CD4-positive, alpha-beta memory T cell (primary cell): ENCODE measurements at regions of chr4 and their contacts with region 1.

Region 1: GRCh38 chr4:128809477-128810330 is at the start of gene JADE1:
- DNase-seq: peak; percentile 88 to 94 (median 90)
- H3K4me3 ChIP-seq: peak within 1 kb of the TSS; percentile 89 to 98
- H3K4me3 Mint-ChIP-seq: peak within 1 kb of the TSS; percentile 96 to 100 (median 99)
- H3K27ac ChIP-seq: peak within 1 kb of the TSS; percentile 61
- H3K27ac Mint-ChIP-seq: peak within 1 kb of the TSS; percentile 96 to 100 (median 98)
- H3K4me1 ChIP-seq: peaks cover 23% of the 10 kb centered on the region
- H3K4me1 Mint-ChIP-seq: peaks cover 9 to 38% (median 18%) of the 10 kb centered on the region in 4 donors
- H3K27me3 ChIP-seq: no peaks in the 10 kb centered on the region
- H3K27me3 Mint-ChIP-seq: no peaks in the 10 kb centered on the region
- total RNA-seq, gene JADE1: 65.6 to 67.3 TPM

Region 2: GRCh38 chr4:127880764-127881562 is 928.7 kb before region 1 on chr4 and contains the start of gene PLK4:
- CTCF ChIA-PET with region 1: no interaction called
- POLR2A ChIA-PET with region 1: interaction called, 3 read pairs
- intact Hi-C with region 1: loop called (anchors 2 kb)
- DNase-seq: peak; percentile 92 to 95 (median 93)
- H3K4me3 ChIP-seq: peak within 1 kb of the TSS; percentile 79 to 93
- H3K4me3 Mint-ChIP-seq: peak within 1 kb of the TSS; percentile 96 to 100 (median 97)
- H3K27ac ChIP-seq: peak within 1 kb of the TSS; percentile 68
- H3K27ac Mint-ChIP-seq: peak within 1 kb of the TSS; percentile 96 to 100 (median 98)
- H3K4me1 ChIP-seq: peaks cover 14% of the 10 kb centered on the region
- H3K4me1 Mint-ChIP-seq: peaks cover 8 to 28% (median 18%) of the 10 kb centered on the region in 4 donors
- H3K27me3 ChIP-seq: no peaks in the 10 kb centered on the region
- H3K27me3 Mint-ChIP-seq: no peaks in the 10 kb centered on the region
- total RNA-seq, gene PLK4: 1.1 to 2.6 TPM

Region 3: GRCh38 chr4:128060699-128061565 is 748.8 kb before region 1 on chr4 and contains the start of gene LARP1B:
- CTCF ChIA-PET with region 1: no interaction called
- POLR2A ChIA-PET with region 1: interaction called, 6 read pairs
- intact Hi-C with region 1: loop called (anchors 5 kb)
- DNase-seq: peak; percentile 90 to 93 (median 92)
- H3K4me3 ChIP-seq: peak within 1 kb of the TSS; percentile 74 to 76
- H3K4me3 Mint-ChIP-seq: peak within 1 kb of the TSS; percentile 86 to 91 (median 88)
- H3K27ac ChIP-seq: peak within 1 kb of the TSS; percentile 85
- H3K27ac Mint-ChIP-seq: peak within 1 kb of the TSS; percentile 90 to 96 (median 91)
- H3K4me1 ChIP-seq: peaks cover 17% of the 10 kb centered on the region
- H3K4me1 Mint-ChIP-seq: peaks cover 10 to 17% (median 13%) of the 10 kb centered on the region in 4 donors
- H3K27me3 ChIP-seq: no peaks in the 10 kb centered on the region
- H3K27me3 Mint-ChIP-seq: no peaks in the 10 kb centered on the region
- total RNA-seq, gene LARP1B: 15.8 to 19.1 TPM

Region 4: GRCh38 chr4:128287871-128288688 is 521.6 kb before region 1 on chr4:
- CTCF ChIA-PET with region 1: no interaction called
- POLR2A ChIA-PET with region 1: interaction called, 3 read pairs
- intact Hi-C with region 1: loop called (anchors 1 kb)
- DNase-seq: peak; percentile 97 to 100 (median 99)
- H3K4me3 ChIP-seq: peak overlapping the region; percentile 33 to 87
- H3K4me3 Mint-ChIP-seq: peak overlapping the region; percentile 81 to 91 (median 88)
- H3K27ac ChIP-seq: peak overlapping the region; percentile 88
- H3K27ac Mint-ChIP-seq: peak overlapping the region; percentile 80 to 97 (median 96)
- H3K4me1 ChIP-seq: peaks cover 43% of the 10 kb centered on the region
- H3K4me1 Mint-ChIP-seq: peaks cover 24 to 42% (median 31%) of the 10 kb centered on the region in 4 donors
- H3K27me3 ChIP-seq: no peaks in the 10 kb centered on the region
- H3K27me3 Mint-ChIP-seq: no peaks in the 10 kb centered on the region

Region 5: GRCh38 chr4:128574706-128575105 is 235.0 kb before region 1 on chr4:
- CTCF ChIA-PET with region 1: interaction called, 17 read pairs
- POLR2A ChIA-PET with region 1: interaction called, 3 read pairs
- intact Hi-C with region 1: no loop called
- DNase-seq: peak; percentile 38 to 52 (median 43)
- H3K4me3 ChIP-seq: no peak overlapping the region
- H3K4me3 Mint-ChIP-seq: no peak overlapping the region
- H3K27ac ChIP-seq: no peak overlapping the region
- H3K27ac Mint-ChIP-seq: no peak overlapping the region
- H3K4me1 ChIP-seq: no peaks in the 10 kb centered on the region
- H3K4me1 Mint-ChIP-seq: no peaks in the 10 kb centered on the region
- H3K27me3 ChIP-seq: no peaks in the 10 kb centered on the region
- H3K27me3 Mint-ChIP-seq: peaks cover 4% of the 10 kb centered on the region in 2 donors

Region 6: GRCh38 chr4:128820671-128821070 is 11.0 kb after region 1 on chr4:
- CTCF ChIA-PET with region 1: interaction called, 7 read pairs
- POLR2A ChIA-PET with region 1: interaction called, 12 read pairs
- intact Hi-C with region 1: no loop called
- DNase-seq: no peak
- H3K4me3 ChIP-seq: no peak overlapping the region
- H3K4me3 Mint-ChIP-seq: peak overlapping the region in 1 of 8 donors; percentile 22
- H3K27ac ChIP-seq: no peak overlapping the region
- H3K27ac Mint-ChIP-seq: peak overlapping the region in 3 of 7 donors; percentile 1 to 35 (median 7)
- H3K4me1 ChIP-seq: peaks cover 69% of the 10 kb centered on the region
- H3K4me1 Mint-ChIP-seq: peaks cover 55 to 87% (median 68%) of the 10 kb centered on the region in 4 donors
- H3K27me3 ChIP-seq: no peaks in the 10 kb centered on the region
- H3K27me3 Mint-ChIP-seq: no peaks in the 10 kb centered on the region

Region 7: GRCh38 chr4:128863312-128864075 is 53.8 kb after region 1 on chr4:
- CTCF ChIA-PET with region 1: interaction called, 10 read pairs
- POLR2A ChIA-PET with region 1: interaction called, 5 read pairs
- intact Hi-C with region 1: loop called (anchors 1 kb)
- DNase-seq: peak; percentile 56 to 69 (median 61)
- H3K4me3 ChIP-seq: no peak overlapping the region
- H3K4me3 Mint-ChIP-seq: peak overlapping the region in 2 of 8 donors; percentile 58 to 75
- H3K27ac ChIP-seq: peak overlapping the region; percentile 50
- H3K27ac Mint-ChIP-seq: peak overlapping the region; percentile 0 to 94 (median 87)
- H3K4me1 ChIP-seq: peaks cover 29% of the 10 kb centered on the region
- H3K4me1 Mint-ChIP-seq: peaks cover 36 to 49% (median 42%) of the 10 kb centered on the region in 4 donors
- H3K27me3 ChIP-seq: no peaks in the 10 kb centered on the region
- H3K27me3 Mint-ChIP-seq: no peaks in the 10 kb centered on the region